Mammary epithelial cell (primary cell): ENCODE measurements at regions of chr17 and their contacts with region 1.

Region 1: DNA sequence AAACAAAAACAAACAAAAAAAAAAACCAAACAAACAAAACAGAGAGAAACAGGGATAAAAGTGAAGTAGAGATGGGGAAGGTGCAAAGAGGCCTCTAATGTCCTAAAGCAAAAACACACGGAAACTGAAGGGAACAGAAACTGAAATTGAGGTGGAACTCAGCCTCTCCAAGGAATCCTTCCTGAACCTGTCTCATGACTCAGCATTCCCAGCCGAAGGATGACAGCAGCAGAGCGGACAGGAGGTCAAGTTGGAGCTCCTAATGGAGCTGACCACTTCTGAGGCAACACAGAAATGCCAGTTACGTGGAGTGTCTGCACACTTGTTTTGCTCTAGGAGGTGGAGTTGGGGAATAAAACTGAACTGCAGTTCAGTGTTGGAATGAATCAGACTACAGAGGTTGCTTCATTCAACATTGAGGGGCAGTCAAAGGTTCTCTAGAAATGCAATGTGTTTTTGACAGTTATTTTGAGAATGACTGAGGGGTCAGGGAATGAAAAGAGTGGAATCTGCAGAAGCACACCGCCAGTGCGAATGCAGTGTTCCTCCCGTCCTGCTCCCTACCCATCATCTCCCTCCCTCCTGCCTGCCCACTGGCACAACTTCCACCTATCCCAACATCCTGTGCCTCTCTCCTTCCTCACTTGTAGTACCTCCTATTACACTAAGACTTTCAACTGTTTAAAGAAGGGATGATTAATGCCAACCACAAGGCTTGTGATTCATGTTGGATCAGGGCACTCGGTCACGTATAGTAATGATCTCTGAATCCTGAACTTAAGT is 6.3 kb downstream of the UBE2O start:
- DNase-seq: peak; percentile 94
- H3K4me3 ChIP-seq: peak overlapping the region; percentile 1 to 33 (median 21)
- H3K27ac ChIP-seq: peak overlapping the region; percentile 41
- H3K4me1 ChIP-seq: peaks cover 58% of the 10 kb centered on the region
- H3K27me3 ChIP-seq: no peaks in the 10 kb centered on the region
- CTCF ChIP-seq: no peak

Region 2: DNA sequence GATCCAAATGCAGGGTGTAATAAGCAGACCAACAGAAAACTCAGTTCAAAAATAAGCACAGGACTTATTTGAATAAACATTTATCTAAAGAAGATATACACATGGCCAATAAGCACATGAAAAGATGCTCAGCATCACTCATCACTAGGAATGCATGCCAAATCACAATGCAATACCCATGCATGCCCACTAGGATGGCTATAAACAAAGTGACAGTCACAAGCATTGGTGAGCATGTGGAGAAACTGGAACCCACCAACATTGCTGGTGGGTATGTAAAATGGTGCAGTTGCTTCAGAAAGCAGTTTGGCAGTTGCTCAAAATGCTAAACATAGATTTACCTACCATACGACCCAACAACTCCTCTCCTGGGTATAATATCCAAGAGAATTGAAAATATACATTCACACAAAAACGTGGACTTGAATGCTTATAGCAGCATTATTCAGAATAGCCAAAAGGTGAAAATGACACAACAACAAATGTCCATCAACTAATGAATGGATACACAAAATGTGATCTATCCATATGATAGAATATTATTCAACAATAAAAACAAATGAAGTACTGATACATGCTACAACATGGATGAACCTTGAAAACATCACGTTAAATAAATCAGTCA is 13.8 kb before region 1 on chr17:
- CTCF ChIA-PET with region 1: no interaction called
- dilution Hi-C with region 1: no loop called
- in situ Hi-C with region 1: no loop called
- intact Hi-C with region 1: loop called (anchors 1 kb)
- DNase-seq: no peak
- H3K4me3 ChIP-seq: no peak overlapping the region
- H3K27ac ChIP-seq: no peak overlapping the region
- H3K4me1 ChIP-seq: peaks cover under 1% of the 10 kb centered on the region
- H3K27me3 ChIP-seq: no peaks in the 10 kb centered on the region
- CTCF ChIP-seq: peak; percentile 52 to 59

Region 3: GRCh38 chr17:76599694-76600478 is 153.2 kb after region 1 on chr17:
- CTCF ChIA-PET with region 1: no interaction called
- dilution Hi-C with region 1: no loop called
- in situ Hi-C with region 1: no loop called
- intact Hi-C with region 1: no loop called
- DNase-seq: peak; percentile 82
- H3K4me3 ChIP-seq: peak overlapping the region in 1 of 3 experiments; percentile 5
- H3K27ac ChIP-seq: peak overlapping the region; percentile 87
- H3K4me1 ChIP-seq: peaks cover 51% of the 10 kb centered on the region
- H3K27me3 ChIP-seq: no peaks in the 10 kb centered on the region
- CTCF ChIP-seq: no peak